ENCODE measurements at regions of chrX and their contacts with region 1.

Region 1: GRCh38 chrX:130079824-130080406 is 30.4 kb downstream of the ELF4 start:
- DNase-seq: peak; percentile 44
- ATAC-seq: peak; percentile 82

Region 2: GRCh38 chrX:130120746-130121504 is 41.0 kb after region 1 on chrX:
- intact Hi-C with region 1: loop called (anchors 5 kb)
- DNase-seq: peak; percentile 85
- ATAC-seq: peak; percentile 84

Region 3: DNA sequence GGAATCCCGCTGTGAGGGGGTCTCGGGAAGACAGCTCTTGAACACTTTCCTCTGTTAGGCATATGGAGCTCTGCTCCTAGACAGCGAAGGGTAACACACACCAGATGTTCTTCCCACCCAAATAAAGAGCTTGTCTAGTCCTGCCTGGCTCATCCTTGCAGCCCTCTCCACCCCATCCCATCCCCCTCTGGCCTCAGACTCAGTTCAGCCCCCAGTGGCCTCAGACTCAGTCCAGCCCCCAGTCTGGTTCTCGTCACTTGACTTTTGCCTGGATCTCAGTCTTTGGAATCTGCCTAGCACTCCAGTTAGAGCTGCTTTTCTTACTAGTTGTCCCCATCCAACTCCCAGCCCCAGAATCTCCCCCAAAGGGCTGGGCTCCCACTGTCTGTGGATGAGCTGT is 106.7 kb after region 1 on chrX:
- intact Hi-C with region 1: loop called (anchors 5 kb)
- DNase-seq: no peak
- ATAC-seq: no peak

Measured in Right ventricle myocardium superior (tissue), 1 donor.